Right ventricle myocardium superior (tissue), 1 donor: ENCODE measurements at regions of chr14 and their contacts with region 1.

Region 1: GRCh38 chr14:61475316-61475715 is 153.9 kb downstream of the PRKCH start:
- DNase-seq: no peak
- ATAC-seq: no peak

Region 2: GRCh38 chr14:61381547-61381946 is 93.8 kb before region 1 on chr14:
- intact Hi-C with region 1: no loop called
- DNase-seq: no peak
- ATAC-seq: no peak

Region 3: GRCh38 chr14:61525293-61526011 is 50.1 kb after region 1 on chr14:
- intact Hi-C with region 1: loop called (anchors 10 kb)
- DNase-seq: peak; percentile 75
- ATAC-seq: peak; percentile 80